Activated CD4-positive, alpha-beta T cell treated with anti-CD3 and anti-CD28 coated beads, Interleukin-2, amount 10 ng/mL, durations not matched to agents 24 days and 14 days (primary cell): ENCODE measurements at regions of chr15 and their contacts with region 1.

Region 1: GRCh38 chr15:72783563-72784237 is at the start of gene ADPGK:
- DNase-seq: peak; percentile 99
- H3K4me3 Mint-ChIP-seq: peak within 1 kb of the TSS; percentile 91
- H3K27ac Mint-ChIP-seq: peak within 1 kb of the TSS; percentile 98
- H3K4me1 Mint-ChIP-seq: peaks cover 67% of the 10 kb centered on the region
- H3K27me3 Mint-ChIP-seq: no peaks in the 10 kb centered on the region
- total RNA-seq, gene ADPGK: 107 and 112 TPM in 2 replicates

Region 2: GRCh38 chr15:72272213-72273002 is 511.3 kb before region 1 on chr15 and contains the start of gene PARP6:
- intact Hi-C with region 1: loop called (anchors 2 kb)
- DNase-seq: peak; percentile 100
- H3K4me3 Mint-ChIP-seq: peak within 1 kb of the TSS; percentile 94
- H3K27ac Mint-ChIP-seq: peak within 1 kb of the TSS; percentile 88
- H3K4me1 Mint-ChIP-seq: peaks cover 32% of the 10 kb centered on the region
- H3K27me3 Mint-ChIP-seq: peaks cover 3% of the 10 kb centered on the region
- total RNA-seq, gene PARP6: 69.7 and 78.6 TPM in 2 replicates

Region 3: DNA sequence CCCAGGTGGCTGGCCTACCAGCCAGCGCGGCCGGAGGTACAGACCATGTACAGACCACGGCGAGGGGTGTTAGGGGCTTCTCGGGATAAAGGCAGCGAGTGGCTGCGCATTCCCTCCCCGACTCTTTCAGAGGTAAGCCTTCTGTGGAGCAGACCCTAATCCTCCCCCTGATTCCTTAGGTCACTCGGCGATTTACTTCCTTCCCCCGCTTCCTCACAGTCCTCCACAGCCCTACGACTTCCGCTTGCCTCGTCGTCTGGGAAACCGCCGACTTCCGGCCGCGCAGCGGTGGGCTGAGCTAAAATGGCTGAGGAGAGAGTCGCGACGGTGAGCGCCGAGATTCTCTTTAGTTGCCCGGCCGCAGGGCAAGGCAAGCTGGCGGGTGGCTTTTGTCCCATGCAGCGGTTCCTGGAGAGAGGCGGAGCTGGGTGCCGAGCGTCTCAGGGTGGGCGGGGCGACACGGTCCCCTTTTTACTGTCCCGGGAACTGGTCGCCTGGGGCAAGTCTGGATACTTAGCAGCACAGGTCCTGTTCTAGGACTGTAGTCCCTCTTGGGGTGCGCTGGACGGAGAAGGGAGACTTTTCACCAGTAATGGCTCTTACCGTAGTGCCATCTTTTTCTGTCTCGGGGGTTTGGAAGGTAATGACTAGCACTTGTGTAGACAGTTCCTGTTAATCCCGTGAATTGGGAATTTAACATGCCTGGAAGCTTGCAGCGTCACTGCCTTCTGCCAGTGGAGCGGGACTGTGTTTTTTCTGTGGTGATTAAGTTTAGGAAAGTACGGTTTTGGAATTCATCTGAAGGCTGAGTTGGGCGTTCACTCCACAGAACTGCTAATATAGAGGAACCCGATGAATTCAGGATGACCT is 97.5 kb before region 1 on chr15 and contains the starts of genes BBS4 and HIGD2B:
- intact Hi-C with region 1: loop called (anchors 2 kb)
- DNase-seq: peak; percentile 97
- H3K4me3 Mint-ChIP-seq: peak within 1 kb of the TSS; percentile 97
- H3K27ac Mint-ChIP-seq: peak within 1 kb of the TSS; percentile 88
- H3K4me1 Mint-ChIP-seq: peaks cover 21% of the 10 kb centered on the region
- H3K27me3 Mint-ChIP-seq: peaks cover under 1% of the 10 kb centered on the region
- total RNA-seq, gene BBS4: 8.3 and 10.2 TPM in 2 replicates
- total RNA-seq, gene HIGD2B: not detected in 2 replicates

Region 4: GRCh38 chr15:72740219-72740618 is 43.5 kb before region 1 on chr15:
- intact Hi-C with region 1: loop called (anchors 5 kb)
- DNase-seq: peak; percentile 68
- H3K4me3 Mint-ChIP-seq: peak overlapping the region; percentile 63
- H3K27ac Mint-ChIP-seq: peak overlapping the region; percentile 30
- H3K4me1 Mint-ChIP-seq: peaks cover 31% of the 10 kb centered on the region
- H3K27me3 Mint-ChIP-seq: no peaks in the 10 kb centered on the region

Region 5: DNA sequence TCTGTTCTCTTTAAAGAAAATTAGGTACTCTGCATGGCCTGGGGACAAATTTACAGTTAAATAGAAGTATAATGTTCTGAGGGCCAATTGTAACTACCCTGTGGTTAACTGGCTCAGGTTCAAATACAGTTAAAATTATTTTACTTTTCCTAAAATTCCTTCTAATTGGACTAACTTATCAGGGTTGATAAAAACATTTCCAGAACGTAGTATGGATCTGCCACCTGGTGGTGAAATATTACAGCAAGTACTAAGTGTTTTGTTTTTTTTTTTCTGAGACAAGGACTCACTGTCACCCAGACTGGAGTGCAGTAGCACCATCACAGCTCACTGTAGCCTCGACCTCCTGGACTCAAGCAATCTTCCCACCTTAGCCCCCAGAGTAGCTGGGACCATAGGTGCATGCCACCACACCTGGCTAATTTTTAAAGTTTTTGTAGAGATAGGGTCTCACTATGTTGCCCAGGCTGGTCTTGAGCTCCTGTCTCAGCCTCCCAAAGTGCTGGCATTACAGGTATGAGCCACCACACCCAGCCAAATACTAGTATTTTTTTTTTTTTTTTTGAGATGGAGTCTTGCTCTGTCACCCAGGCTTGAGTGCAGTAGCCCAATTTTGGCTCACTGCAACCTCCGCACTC is 297.7 kb after region 1 on chr15:
- intact Hi-C with region 1: loop called (anchors 1 kb)
- DNase-seq: peak; percentile 69
- H3K4me3 Mint-ChIP-seq: no peak overlapping the region
- H3K27ac Mint-ChIP-seq: no peak overlapping the region
- H3K4me1 Mint-ChIP-seq: no peaks in the 10 kb centered on the region
- H3K27me3 Mint-ChIP-seq: peaks cover 4% of the 10 kb centered on the region